Caco-2 (cell line): ENCODE measurements at regions of chr22 and their contacts with region 1.

Region 1: GRCh38 chr22:40732999-40733292 is 53.7 kb downstream of the MCHR1 start:
- DNase-seq: no peak
- H3K4me3 ChIP-seq: no peak overlapping the region
- H3K4me3 Mint-ChIP-seq: peak overlapping the region; percentile 33
- H3K27ac Mint-ChIP-seq: peak overlapping the region; percentile 85
- H3K4me1 ChIP-seq: peaks cover 20% of the 10 kb centered on the region
- H3K4me1 Mint-ChIP-seq: peaks cover 27% of the 10 kb centered on the region
- H3K27me3 ChIP-seq: no peaks in the 10 kb centered on the region
- H3K27me3 Mint-ChIP-seq: no peaks in the 10 kb centered on the region
- CTCF ChIP-seq: no peak

Region 2: DNA sequence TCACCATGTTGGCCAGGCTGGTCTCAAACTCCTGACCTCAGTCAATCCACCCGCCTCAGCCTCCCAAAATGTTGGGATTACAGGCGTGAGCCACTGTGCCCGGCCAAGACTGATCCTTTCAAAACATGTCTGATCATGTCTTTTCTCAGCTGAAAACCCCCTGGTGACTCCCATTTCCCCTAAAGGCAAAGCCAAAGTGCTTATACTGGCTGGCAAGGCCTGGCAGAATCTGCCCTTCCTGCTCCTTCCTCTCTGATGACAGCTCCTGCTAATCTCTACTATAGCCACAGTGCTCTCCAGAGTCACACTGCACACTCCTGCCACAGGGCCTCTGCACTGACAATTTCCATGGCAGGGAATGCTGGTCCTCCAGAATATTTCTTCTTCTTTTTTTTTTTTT is 56.3 kb before region 1 on chr22:
- CTCF ChIA-PET with region 1: no interaction called
- POLR2A ChIA-PET with region 1: no interaction called
- intact Hi-C with region 1: no loop called
- DNase-seq: no peak
- H3K4me3 ChIP-seq: no peak overlapping the region
- H3K4me3 Mint-ChIP-seq: no peak overlapping the region
- H3K27ac Mint-ChIP-seq: no peak overlapping the region
- H3K4me1 ChIP-seq: no peaks in the 10 kb centered on the region
- H3K4me1 Mint-ChIP-seq: no peaks in the 10 kb centered on the region
- H3K27me3 ChIP-seq: no peaks in the 10 kb centered on the region
- H3K27me3 Mint-ChIP-seq: no peaks in the 10 kb centered on the region
- CTCF ChIP-seq: no peak

Region 3: GRCh38 chr22:40690370-40690769 is 42.6 kb before region 1 on chr22:
- CTCF ChIA-PET with region 1: no interaction called
- POLR2A ChIA-PET with region 1: no interaction called
- intact Hi-C with region 1: no loop called
- DNase-seq: no peak
- H3K4me3 ChIP-seq: no peak overlapping the region
- H3K4me3 Mint-ChIP-seq: no peak overlapping the region
- H3K27ac Mint-ChIP-seq: no peak overlapping the region
- H3K4me1 ChIP-seq: no peaks in the 10 kb centered on the region
- H3K4me1 Mint-ChIP-seq: no peaks in the 10 kb centered on the region
- H3K27me3 ChIP-seq: no peaks in the 10 kb centered on the region
- H3K27me3 Mint-ChIP-seq: no peaks in the 10 kb centered on the region
- CTCF ChIP-seq: no peak

Region 4: GRCh38 chr22:40764763-40765441 is 32.0 kb after region 1 on chr22:
- CTCF ChIA-PET with region 1: no interaction called
- POLR2A ChIA-PET with region 1: no interaction called
- intact Hi-C with region 1: loop called (anchors 1 kb)
- DNase-seq: no peak
- H3K4me3 ChIP-seq: no peak overlapping the region
- H3K4me3 Mint-ChIP-seq: no peak overlapping the region
- H3K27ac Mint-ChIP-seq: no peak overlapping the region
- H3K4me1 ChIP-seq: no peaks in the 10 kb centered on the region
- H3K4me1 Mint-ChIP-seq: no peaks in the 10 kb centered on the region
- H3K27me3 ChIP-seq: no peaks in the 10 kb centered on the region
- H3K27me3 Mint-ChIP-seq: no peaks in the 10 kb centered on the region
- CTCF ChIP-seq: no peak